Activated naive CD4-positive, alpha-beta T cell treated with anti-CD3 and anti-CD28 coated beads for 36 hours (primary cell): ENCODE measurements at regions of chr1 and their contacts with region 1.

Region 1: DNA sequence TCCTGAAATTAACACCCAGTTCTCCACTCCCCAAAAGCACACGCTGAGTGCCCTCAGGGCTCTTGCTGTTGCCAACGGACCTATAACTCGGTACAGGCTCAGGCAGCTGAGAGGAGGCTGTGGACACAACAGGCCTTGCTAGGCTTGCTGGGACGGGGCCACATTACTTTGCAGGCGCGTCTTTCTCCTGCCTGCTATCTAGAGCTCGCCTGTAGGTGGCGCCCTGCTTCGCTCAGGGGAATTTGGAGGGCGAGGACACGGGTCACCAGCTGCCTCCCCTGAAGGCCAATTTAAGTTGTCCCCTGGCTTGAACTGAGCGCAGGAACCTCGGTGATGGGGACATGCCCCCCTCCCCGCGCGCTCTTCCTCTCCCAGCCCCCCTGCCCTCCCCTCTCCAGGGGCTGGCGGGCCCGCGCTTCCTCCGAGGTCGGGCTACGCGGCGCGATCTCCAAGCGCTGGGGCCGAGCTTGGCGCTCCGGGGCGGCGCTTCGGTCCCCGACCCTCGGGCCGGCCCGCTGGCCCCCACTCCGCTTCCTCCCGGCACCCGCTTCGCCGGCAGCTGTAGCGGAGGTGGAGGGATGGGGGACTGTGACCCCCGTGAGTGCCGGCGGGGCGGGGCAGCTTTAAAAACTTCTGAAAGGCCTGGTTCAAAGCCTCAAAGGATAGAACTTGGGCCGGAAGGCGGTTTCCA is 32.4 kb upstream of the NFIA start:
- DNase-seq: peak; percentile 93
- H3K4me3 Mint-ChIP-seq: peak overlapping the region; percentile 74
- H3K27ac Mint-ChIP-seq: no peak overlapping the region
- H3K4me1 Mint-ChIP-seq: peaks cover 28% of the 10 kb centered on the region
- H3K27me3 Mint-ChIP-seq: peaks cover 42% of the 10 kb centered on the region

Region 2: GRCh38 chr1:61210435-61211154 is 160.6 kb after region 1 on chr1:
- CTCF ChIA-PET with region 1: interaction called, 3 read pairs
- intact Hi-C with region 1: loop called (anchors 1 kb)
- DNase-seq: no peak
- H3K4me3 Mint-ChIP-seq: no peak overlapping the region
- H3K27ac Mint-ChIP-seq: no peak overlapping the region
- H3K4me1 Mint-ChIP-seq: no peaks in the 10 kb centered on the region
- H3K27me3 Mint-ChIP-seq: no peaks in the 10 kb centered on the region

Region 3: DNA sequence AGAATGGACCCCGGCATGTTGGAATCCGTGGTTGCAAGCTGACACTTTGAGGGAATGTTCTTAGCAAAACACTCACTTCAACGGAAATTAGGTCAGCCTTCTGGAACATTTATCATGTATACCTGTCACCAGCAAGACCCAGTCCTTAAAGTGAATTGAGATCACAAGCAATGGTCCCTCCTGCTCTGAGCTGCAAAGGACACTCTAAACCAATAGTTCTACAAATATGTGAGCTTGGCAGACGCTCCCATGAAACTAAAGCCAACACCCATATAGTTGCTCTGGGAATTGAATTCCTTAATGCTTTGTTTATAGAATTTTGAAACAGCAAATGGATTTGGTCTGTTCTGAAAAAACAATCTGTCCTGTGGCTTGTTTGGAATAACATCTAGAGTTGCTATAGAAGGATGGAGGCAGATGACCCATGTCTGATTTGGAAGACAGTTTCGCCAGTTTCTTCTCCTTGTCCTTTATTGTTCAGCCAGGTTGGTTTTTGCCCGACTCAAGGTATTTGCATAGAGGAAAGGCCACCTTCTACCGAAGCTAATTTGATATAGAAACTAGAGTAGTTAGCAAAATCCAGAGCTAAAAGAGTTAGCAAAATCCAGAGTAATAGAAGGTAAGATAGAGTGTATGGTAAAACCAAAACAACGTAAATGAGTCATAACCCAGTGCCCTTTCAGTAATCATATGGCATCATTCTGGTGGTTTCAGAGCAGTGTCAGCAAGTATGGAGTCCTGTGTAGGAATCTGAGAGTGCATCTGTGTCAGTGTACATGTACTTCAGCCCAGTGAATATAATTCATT is 268.5 kb after region 1 on chr1:
- CTCF ChIA-PET with region 1: interaction called, 3 read pairs
- intact Hi-C with region 1: loop called (anchors 5 kb)
- DNase-seq: peak; percentile 56
- H3K4me3 Mint-ChIP-seq: peak overlapping the region; percentile 45
- H3K27ac Mint-ChIP-seq: peak overlapping the region; percentile 67
- H3K4me1 Mint-ChIP-seq: peaks cover 21% of the 10 kb centered on the region
- H3K27me3 Mint-ChIP-seq: peaks cover 12% of the 10 kb centered on the region

Region 4: DNA sequence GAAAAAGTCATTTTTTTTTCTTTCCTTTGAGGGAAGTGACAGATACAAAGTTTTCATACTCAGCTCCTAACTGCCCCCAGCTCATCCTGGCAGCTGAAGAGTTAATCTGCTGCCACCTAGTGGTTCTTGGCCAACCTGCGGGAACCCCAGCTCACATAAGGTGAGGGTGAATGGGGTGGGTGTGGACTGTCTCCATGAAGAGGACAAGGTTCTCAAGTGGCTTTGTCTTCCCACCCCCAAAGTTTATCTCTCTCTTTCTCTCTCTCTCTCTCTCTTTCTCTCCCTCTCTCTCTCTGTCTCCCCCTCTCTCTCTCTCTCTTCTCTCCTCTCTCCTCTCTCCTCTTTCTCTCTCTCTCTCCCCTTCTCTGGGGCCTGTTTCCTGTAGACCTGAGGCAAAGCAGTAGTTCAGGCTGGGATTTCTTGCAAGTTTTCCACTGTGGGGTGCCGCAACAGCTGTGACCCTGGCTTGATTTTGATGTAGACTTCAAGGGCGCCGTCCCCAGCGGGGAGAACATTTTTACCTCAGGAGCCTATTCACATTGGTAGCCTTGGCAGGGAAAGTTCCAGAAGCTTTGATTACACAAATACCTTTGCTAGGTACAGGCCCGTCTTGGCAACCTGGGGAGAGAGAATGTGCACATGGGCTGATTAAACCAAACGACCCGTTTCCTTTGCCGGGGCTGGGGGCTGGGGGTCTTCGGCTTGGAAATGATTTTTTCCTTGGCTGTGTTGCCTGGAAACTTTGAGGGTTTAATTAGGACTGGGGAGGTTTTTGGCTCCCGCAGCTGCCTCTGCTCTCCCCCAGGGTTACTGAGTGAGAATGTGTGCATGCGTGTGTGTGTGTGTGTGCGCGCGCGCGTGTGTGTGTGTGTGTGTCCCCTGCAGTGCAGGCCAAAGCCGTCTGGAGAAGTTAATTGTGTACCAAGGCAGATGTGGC is 539.0 kb after region 1 on chr1:
- CTCF ChIA-PET with region 1: interaction called, 25 read pairs
- intact Hi-C with region 1: loop called (anchors 1 kb)
- DNase-seq: peak; percentile 79
- H3K4me3 Mint-ChIP-seq: no peak overlapping the region
- H3K27ac Mint-ChIP-seq: no peak overlapping the region
- H3K4me1 Mint-ChIP-seq: no peaks in the 10 kb centered on the region
- H3K27me3 Mint-ChIP-seq: peaks cover 4% of the 10 kb centered on the region